ENCODE measurements at regions of chr11 and their contacts with region 1.

Region 1: GRCh38 chr11:9460322-9461067 is at the start of gene ZNF143:
- DNase-seq: peak; percentile 100
- H3K4me3 ChIP-seq: peak within 1 kb of the TSS; percentile 98
- H3K27ac ChIP-seq: peak within 1 kb of the TSS; percentile 99 to 100
- H3K4me1 ChIP-seq: peaks cover 7% of the 10 kb centered on the region
- H3K27me3 ChIP-seq: no peaks in the 10 kb centered on the region
- CTCF ChIP-seq: peak in 1 of 3 donors; percentile 20
- EP300 ChIP-seq: peak; percentile 16
- POLR2A ChIP-seq: peak; percentile 98
- total RNA-seq, gene ZNF143: 12.6 to 48.7 (median 32.3) TPM

Region 2: DNA sequence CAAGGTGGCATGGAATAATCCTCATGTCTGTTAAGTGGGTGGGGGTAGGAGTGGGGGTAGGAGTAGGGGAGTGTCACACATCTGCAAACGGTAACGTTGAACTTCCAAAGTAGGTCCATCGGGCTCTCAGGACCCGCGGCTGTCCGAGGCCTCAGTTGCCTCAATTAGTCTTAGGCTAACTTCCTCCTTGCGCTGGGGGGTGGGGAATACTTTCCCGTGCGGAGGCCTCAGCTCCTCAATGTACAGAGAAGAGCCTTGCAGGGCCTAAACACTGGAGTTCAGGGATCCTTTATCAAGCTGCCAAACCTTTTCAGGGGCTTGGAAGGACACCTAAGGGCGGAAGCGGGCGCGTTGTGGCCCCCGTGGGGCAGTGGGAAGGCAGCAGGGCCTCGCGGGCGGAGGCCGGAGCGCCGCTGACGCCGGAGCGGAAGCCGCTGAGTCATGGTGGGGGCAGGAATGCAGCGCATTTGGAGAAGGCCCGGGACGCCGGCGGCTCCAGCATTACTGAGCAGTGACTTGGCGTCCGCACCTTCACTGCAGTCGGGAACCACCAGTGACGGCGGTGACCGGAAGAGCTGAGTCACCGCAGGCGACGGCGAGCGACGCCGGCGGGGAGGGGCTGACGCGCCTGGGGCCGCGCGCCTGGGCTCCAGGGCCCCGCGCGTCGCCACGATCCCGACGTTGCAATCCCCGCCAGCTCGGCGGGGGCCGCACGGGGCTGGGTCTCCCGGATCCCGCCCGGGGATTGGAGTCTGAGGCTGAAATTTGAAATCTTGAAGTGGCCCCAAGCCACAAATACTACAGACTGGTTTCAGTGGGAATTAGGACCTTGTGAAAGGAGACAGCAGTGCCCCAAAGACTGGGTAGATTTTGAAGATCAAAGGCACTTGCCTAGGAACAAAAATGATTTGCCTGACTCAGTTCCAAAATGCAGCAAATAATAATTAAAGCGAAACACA is 96.3 kb before region 1 on chr11:
- intact Hi-C with region 1: loop called in 1 of 4 experiments (anchors 5 kb)
- DNase-seq: peak; percentile 88 to 94 (median 89)
- H3K4me3 ChIP-seq: peak overlapping the region; percentile 52
- H3K27ac ChIP-seq: peak overlapping the region; percentile 74 to 77
- H3K4me1 ChIP-seq: peaks cover 4% of the 10 kb centered on the region
- H3K27me3 ChIP-seq: no peaks in the 10 kb centered on the region
- CTCF ChIP-seq: no peak
- EP300 ChIP-seq: peak; percentile 78
- POLR2A ChIP-seq: peak; percentile 69

Region 3: DNA sequence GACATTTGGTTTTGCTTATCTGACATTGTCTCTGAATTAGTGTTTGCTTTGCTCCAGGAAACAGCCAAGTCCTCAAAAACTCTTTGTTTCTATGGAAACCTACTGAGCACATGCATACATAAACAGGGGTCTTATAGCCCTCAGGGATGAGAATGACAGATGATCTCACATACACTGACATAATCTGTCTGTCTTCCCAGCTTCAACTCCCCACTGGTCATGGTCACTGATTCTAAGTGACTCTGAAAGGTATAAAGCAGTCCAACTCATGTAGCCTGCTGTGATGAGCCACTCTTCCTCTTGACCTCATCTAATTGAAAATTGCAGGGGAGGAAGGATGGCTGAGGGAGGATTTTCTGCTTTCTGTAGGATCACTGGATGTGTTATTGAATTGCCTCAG is 12.9 kb after region 1 on chr11:
- intact Hi-C with region 1: no loop called
- DNase-seq: no peak
- H3K4me3 ChIP-seq: no peak overlapping the region
- H3K27ac ChIP-seq: no peak overlapping the region
- H3K4me1 ChIP-seq: no peaks in the 10 kb centered on the region
- H3K27me3 ChIP-seq: no peaks in the 10 kb centered on the region
- CTCF ChIP-seq: no peak
- EP300 ChIP-seq: no peak
- POLR2A ChIP-seq: no peak

Region 4: DNA sequence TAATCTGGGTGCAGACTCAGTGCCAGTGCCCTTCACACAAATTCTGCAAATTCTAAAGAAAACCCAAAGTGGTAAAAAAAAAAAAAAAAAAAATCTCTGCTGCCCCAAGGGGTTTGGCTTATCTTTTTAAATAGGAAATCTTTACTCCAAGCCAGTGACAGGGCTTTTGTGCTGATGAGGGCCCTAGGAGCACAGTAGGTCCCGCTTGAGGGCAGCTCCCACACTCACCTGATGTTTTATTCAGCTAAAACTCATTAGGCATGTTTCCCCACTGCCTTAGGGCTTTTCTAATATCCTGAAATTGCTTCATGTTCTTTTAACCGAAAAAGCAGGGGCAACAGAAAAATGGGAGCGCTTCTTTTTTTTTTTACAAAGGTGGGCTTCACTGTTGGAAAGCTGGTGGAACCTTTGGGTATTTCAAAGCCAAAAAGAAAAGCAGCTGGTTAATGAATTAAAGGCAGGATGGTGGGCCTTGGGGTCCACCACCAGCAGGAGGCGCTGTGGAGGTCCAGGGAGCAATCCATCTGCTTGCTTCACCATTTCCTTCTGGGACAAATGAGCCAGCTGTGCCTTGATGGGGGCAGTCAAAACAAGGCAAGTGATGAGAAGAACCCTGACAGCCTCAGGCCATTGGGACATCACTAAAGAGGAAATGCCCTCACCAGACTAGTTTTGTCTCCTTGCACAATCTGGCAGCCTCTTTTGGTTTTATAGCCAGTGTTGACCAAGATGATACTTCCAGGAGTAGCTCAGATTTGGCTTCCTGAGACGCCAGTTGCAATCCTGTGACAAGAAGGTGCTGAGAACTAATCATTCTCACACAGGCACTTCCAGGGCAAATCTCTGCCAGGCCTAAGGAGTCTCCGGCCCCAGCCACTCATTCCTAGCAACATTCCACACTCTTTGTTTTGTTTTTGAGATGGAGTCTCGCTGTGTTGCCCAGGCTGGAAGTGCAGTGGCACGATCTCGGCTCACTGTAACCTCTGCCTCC is 74.6 kb after region 1 on chr11:
- intact Hi-C with region 1: no loop called
- DNase-seq: peak in 4 of 5 donors; percentile 42 to 71 (median 59)
- H3K4me3 ChIP-seq: no peak overlapping the region
- H3K27ac ChIP-seq: no peak overlapping the region
- H3K4me1 ChIP-seq: no peaks in the 10 kb centered on the region
- H3K27me3 ChIP-seq: no peaks in the 10 kb centered on the region
- CTCF ChIP-seq: peak in 1 of 3 donors; percentile 46
- EP300 ChIP-seq: no peak
- POLR2A ChIP-seq: no peak

Region 5: GRCh38 chr11:9573052-9573774 is 112.7 kb after region 1 on chr11 and contains the start of gene WEE1:
- intact Hi-C with region 1: loop called in 1 of 4 experiments (anchors 2 kb)
- DNase-seq: peak; percentile 99
- H3K4me3 ChIP-seq: peak within 1 kb of the TSS; percentile 80
- H3K27ac ChIP-seq: peak within 1 kb of the TSS; percentile 94 to 98
- H3K4me1 ChIP-seq: peaks cover 2% of the 10 kb centered on the region
- H3K27me3 ChIP-seq: no peaks in the 10 kb centered on the region
- CTCF ChIP-seq: no peak
- EP300 ChIP-seq: peak; percentile 52
- POLR2A ChIP-seq: peak; percentile 92
- total RNA-seq, gene WEE1: 10.5 to 55.4 (median 21.6) TPM